Dendritic cell treated with granulocyte-macrophage colony-stimulating factor and Interleukin-4, amounts not matched to agents 40 ng/mL and 50 ng/mL, for 4 days (primary cell): ENCODE measurements at regions of chr14 and their contacts with region 1.

Region 1: GRCh38 chr14:99982537-99983250 is 82.5 kb upstream of the EVL start:
- H3K4me3 Mint-ChIP-seq: no peak overlapping the region
- H3K27ac Mint-ChIP-seq: no peak overlapping the region
- H3K4me1 Mint-ChIP-seq: peaks cover 10% of the 10 kb centered on the region
- H3K27me3 Mint-ChIP-seq: peaks cover 2% of the 10 kb centered on the region

Region 2: DNA sequence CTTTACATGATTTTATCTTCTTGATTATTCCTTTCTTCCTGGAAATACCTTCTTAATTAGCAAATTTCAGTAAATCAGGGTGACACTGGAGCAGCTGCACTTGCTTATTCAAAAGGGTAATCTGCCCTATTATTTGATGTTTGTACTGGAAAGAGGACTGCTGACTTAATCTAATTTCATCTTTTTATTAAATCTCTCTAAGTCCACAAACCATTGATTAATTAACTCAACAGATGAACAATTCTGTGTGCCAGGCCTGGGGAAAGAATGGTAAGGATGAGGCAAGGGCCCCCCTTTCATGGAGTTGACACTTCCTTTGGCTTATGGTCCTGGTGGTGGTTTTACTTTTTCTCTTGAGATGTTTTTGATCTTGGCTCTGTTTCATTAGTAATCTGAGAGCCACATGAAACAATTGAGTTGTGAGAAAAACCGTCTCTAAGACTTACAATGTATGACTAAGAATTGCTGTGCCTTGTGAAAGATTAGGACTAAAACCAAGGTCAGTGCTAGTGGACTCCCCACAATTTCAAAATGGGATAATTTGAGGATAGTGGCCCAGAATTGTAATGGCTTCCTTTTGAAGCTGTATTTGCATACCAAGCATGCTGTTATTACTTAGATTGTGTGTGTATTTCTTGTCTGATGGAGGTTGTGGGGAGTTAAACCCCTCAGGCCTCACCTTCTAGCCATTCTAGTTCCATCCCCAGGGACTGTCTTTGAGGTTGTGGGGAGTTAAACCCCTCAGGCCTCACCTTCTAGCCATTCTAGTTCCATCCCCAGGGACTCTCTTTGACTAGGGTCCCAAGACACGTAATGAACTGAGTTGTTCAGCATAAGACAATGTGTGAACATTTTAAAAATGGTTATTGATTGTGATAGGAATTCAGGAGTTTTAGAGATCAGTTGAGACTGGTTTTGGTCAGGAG is 30.0 kb after region 1 on chr14:
- intact Hi-C with region 1: no loop called
- H3K4me3 Mint-ChIP-seq: no peak overlapping the region
- H3K27ac Mint-ChIP-seq: peak overlapping the region; percentile 18
- H3K4me1 Mint-ChIP-seq: peaks cover 38% of the 10 kb centered on the region
- H3K27me3 Mint-ChIP-seq: no peaks in the 10 kb centered on the region

Region 3: DNA sequence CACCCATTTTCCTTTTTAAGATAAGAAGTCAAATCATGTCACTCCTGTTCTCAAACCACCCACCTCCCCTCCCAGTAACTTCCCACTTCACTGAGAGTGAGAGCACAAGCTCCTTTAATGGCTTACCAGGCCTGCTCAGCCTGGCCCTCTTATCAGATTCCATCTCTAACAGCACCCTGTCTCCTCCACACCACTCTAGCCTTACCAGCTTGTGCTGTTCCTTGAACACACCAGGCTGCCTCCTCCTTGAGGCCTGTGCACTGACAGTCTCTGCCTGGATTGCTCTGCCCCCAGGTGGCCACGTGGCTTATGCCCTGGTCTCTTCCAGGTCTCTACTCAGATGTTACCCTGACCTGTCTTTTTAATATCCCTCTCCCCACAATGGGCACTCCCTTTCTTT is 42.4 kb after region 1 on chr14:
- intact Hi-C with region 1: loop called (anchors 2 kb)
- H3K4me3 Mint-ChIP-seq: no peak overlapping the region
- H3K27ac Mint-ChIP-seq: peak overlapping the region; percentile 9
- H3K4me1 Mint-ChIP-seq: peaks cover 10% of the 10 kb centered on the region
- H3K27me3 Mint-ChIP-seq: no peaks in the 10 kb centered on the region

Region 4: GRCh38 chr14:100078991-100079725 is 96.5 kb after region 1 on chr14:
- intact Hi-C with region 1: loop called (anchors 5 kb)
- H3K4me3 Mint-ChIP-seq: no peak overlapping the region
- H3K27ac Mint-ChIP-seq: peak overlapping the region; percentile 34
- H3K4me1 Mint-ChIP-seq: peaks cover 85% of the 10 kb centered on the region
- H3K27me3 Mint-ChIP-seq: no peaks in the 10 kb centered on the region

Region 5: GRCh38 chr14:100108042-100108825 is 125.5 kb after region 1 on chr14:
- intact Hi-C with region 1: loop called (anchors 2 kb)
- H3K4me3 Mint-ChIP-seq: no peak overlapping the region
- H3K27ac Mint-ChIP-seq: peak overlapping the region; percentile 43
- H3K4me1 Mint-ChIP-seq: peaks cover 73% of the 10 kb centered on the region
- H3K27me3 Mint-ChIP-seq: no peaks in the 10 kb centered on the region